ENCODE measurements at regions of chr6 and their contacts with region 1.

Region 1: DNA sequence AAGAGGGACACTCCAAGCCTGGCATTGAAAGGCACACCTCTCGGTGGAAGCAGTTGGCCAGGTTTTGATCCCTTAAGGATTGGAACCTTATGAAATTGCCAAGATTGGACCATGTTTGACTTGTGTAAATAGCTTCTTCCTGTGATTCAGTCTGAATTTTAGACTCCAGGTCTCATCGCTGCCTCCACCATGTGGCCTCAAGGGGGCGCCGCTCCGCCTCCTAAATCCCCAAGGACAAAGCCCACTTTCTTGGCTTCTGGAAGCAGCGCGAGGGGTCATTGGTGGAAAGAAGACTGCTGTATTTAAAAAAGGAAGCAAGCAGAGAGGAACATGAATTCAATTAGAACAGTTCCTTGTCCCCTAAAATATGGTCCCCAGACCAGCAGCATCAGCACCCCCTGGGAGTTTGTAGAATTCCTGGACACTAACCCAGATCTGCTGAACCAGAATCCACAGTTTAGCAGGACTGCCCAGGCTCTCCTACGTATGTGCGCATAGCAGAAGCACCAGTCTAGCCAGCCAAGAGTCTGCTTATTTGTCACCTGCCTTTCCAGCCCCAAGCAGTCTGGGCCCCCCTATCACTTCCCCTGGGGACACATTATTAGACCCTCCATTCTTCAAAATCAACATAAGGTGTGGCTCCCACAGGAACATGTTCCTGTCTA is 108.5 kb downstream of the LY86 start:
- DNase-seq: no peak
- ATAC-seq: peak; percentile 71
- H3K4me3 ChIP-seq: no peak overlapping the region
- H3K27ac ChIP-seq: no peak overlapping the region
- H3K4me1 ChIP-seq: no peaks in the 10 kb centered on the region
- H3K27me3 ChIP-seq: no peaks in the 10 kb centered on the region; a peak in 1 of 4 replicates
- CTCF ChIP-seq: peak; percentile 53 to 80 (median 66)
- EP300 ChIP-seq: no peak
- POLR2A ChIP-seq: no peak
- RAD21 ChIP-seq: peak; percentile 75

Region 2: DNA sequence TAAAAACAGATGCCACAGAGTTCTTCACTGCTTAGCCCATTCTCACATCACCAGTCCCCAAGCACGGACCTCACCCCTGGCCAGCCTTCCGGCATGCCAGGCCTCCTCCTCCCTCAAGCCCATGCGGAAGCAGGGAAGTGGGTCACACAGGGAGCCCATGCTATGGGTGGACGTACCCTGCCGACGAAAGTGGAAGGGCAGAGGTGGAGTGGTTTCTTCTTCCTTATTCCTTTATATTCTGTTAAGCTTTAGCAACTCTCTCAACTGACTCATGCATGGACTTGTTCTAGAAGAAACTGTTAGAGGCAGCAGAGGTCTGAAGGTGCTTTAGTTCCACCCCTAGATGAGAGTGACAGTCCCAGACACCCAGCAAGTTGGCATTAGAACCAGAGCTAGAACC is 10.1 kb after region 1 on chr6:
- CTCF ChIA-PET with region 1: interaction called, 10 read pairs
- POLR2A ChIA-PET with region 1: interaction called, 5 read pairs
- RAD21 ChIA-PET with region 1: no interaction called
- SMC1A ChIA-PET with region 1: interaction called, 10 read pairs
- in situ Hi-C with region 1: no loop called
- intact Hi-C with region 1: no loop called
- DNase-seq: no peak
- ATAC-seq: no peak
- H3K4me3 ChIP-seq: no peak overlapping the region
- H3K27ac ChIP-seq: no peak overlapping the region
- H3K4me1 ChIP-seq: peaks cover 7% of the 10 kb centered on the region
- H3K27me3 ChIP-seq: no peaks in the 10 kb centered on the region
- CTCF ChIP-seq: no peak
- EP300 ChIP-seq: no peak
- POLR2A ChIP-seq: no peak
- RAD21 ChIP-seq: no peak

Region 3: DNA sequence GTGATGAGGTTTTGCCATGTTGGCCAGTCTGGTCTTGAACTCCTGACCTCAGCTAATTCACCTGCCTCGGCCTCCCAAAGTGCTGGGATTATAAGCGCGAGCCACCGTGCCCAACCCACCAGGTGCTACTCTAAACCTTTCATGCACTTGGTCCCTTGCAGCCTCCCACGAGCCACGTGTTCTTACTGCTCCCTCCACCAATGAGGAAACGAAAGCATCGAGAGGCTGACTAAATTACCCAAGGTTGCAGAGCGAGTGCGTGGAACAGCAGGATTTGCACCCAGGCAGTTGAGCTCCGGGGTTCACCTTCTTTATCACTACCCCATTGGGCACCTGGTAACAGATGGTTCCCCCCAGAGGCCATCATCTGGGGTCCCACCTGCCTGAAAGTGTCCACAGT is 99.8 kb after region 1 on chr6:
- CTCF ChIA-PET with region 1: no interaction called
- POLR2A ChIA-PET with region 1: no interaction called
- RAD21 ChIA-PET with region 1: no interaction called
- SMC1A ChIA-PET with region 1: no interaction called
- in situ Hi-C with region 1: no loop called
- intact Hi-C with region 1: no loop called
- DNase-seq: no peak
- ATAC-seq: no peak
- H3K4me3 ChIP-seq: no peak overlapping the region
- H3K27ac ChIP-seq: no peak overlapping the region; the same call in 1 of the 2 replicates
- H3K4me1 ChIP-seq: peaks cover 58% of the 10 kb centered on the region
- H3K27me3 ChIP-seq: no peaks in the 10 kb centered on the region
- CTCF ChIP-seq: no peak
- EP300 ChIP-seq: no peak
- POLR2A ChIP-seq: no peak
- RAD21 ChIP-seq: no peak

Region 4: GRCh38 chr6:6858533-6858982 is 161.6 kb after region 1 on chr6:
- CTCF ChIA-PET with region 1: no interaction called
- POLR2A ChIA-PET with region 1: no interaction called
- RAD21 ChIA-PET with region 1: no interaction called
- SMC1A ChIA-PET with region 1: no interaction called
- in situ Hi-C with region 1: no loop called
- intact Hi-C with region 1: no loop called
- DNase-seq: no peak
- ATAC-seq: no peak
- H3K4me3 ChIP-seq: no peak overlapping the region
- H3K27ac ChIP-seq: no peak overlapping the region
- H3K4me1 ChIP-seq: peaks cover 14% of the 10 kb centered on the region
- H3K27me3 ChIP-seq: no peaks in the 10 kb centered on the region
- CTCF ChIP-seq: no peak
- EP300 ChIP-seq: no peak
- POLR2A ChIP-seq: no peak
- RAD21 ChIP-seq: no peak

Region 5: GRCh38 chr6:7228662-7229375 is 531.8 kb after region 1 on chr6:
- CTCF ChIA-PET with region 1: no interaction called
- POLR2A ChIA-PET with region 1: no interaction called
- RAD21 ChIA-PET with region 1: no interaction called
- SMC1A ChIA-PET with region 1: no interaction called
- in situ Hi-C with region 1: no loop called
- intact Hi-C with region 1: no loop called
- DNase-seq: no peak
- ATAC-seq: no peak
- H3K4me3 ChIP-seq: no peak overlapping the region
- H3K27ac ChIP-seq: no peak overlapping the region
- H3K4me1 ChIP-seq: peaks cover 9% of the 10 kb centered on the region
- H3K27me3 ChIP-seq: no peaks in the 10 kb centered on the region
- CTCF ChIP-seq: no peak
- EP300 ChIP-seq: no peak
- POLR2A ChIP-seq: no peak
- RAD21 ChIP-seq: no peak